PC-9 (cell line): ENCODE measurements at regions of chr12 and their contacts with region 1.

Region 1: GRCh38 chr12:12696562-12697383 is 790 bp upstream of the GPR19 start:
- DNase-seq: peak; percentile 64 to 89
- H3K4me3 ChIP-seq: peak overlapping the region; percentile 70
- H3K27ac ChIP-seq: peak overlapping the region; percentile 84
- H3K4me1 ChIP-seq: peaks cover 13% of the 10 kb centered on the region
- H3K27me3 ChIP-seq: no peaks in the 10 kb centered on the region
- CTCF ChIP-seq: no peak

Region 2: GRCh38 chr12:12272869-12273268 is 423.9 kb before region 1 on chr12:
- CTCF ChIA-PET with region 1: no interaction called
- POLR2A ChIA-PET with region 1: no interaction called
- intact Hi-C with region 1: loop called (anchors 1 kb)
- DNase-seq: peak; percentile 11 to 46
- H3K4me3 ChIP-seq: no peak overlapping the region
- H3K27ac ChIP-seq: no peak overlapping the region
- H3K4me1 ChIP-seq: peaks cover 19% of the 10 kb centered on the region; the same call in 1 of the 2 replicates
- H3K27me3 ChIP-seq: no peaks in the 10 kb centered on the region
- CTCF ChIP-seq: no peak

Region 3: GRCh38 chr12:12327802-12328201 is 369.0 kb before region 1 on chr12:
- CTCF ChIA-PET with region 1: interaction called, 17 read pairs
- POLR2A ChIA-PET with region 1: no interaction called
- intact Hi-C with region 1: no loop called
- DNase-seq: peak in 1 of 2 experiments; percentile 57
- H3K4me3 ChIP-seq: no peak overlapping the region
- H3K27ac ChIP-seq: no peak overlapping the region
- H3K4me1 ChIP-seq: peaks cover 19% of the 10 kb centered on the region
- H3K27me3 ChIP-seq: no peaks in the 10 kb centered on the region
- CTCF ChIP-seq: peak; percentile 80

Region 4: DNA sequence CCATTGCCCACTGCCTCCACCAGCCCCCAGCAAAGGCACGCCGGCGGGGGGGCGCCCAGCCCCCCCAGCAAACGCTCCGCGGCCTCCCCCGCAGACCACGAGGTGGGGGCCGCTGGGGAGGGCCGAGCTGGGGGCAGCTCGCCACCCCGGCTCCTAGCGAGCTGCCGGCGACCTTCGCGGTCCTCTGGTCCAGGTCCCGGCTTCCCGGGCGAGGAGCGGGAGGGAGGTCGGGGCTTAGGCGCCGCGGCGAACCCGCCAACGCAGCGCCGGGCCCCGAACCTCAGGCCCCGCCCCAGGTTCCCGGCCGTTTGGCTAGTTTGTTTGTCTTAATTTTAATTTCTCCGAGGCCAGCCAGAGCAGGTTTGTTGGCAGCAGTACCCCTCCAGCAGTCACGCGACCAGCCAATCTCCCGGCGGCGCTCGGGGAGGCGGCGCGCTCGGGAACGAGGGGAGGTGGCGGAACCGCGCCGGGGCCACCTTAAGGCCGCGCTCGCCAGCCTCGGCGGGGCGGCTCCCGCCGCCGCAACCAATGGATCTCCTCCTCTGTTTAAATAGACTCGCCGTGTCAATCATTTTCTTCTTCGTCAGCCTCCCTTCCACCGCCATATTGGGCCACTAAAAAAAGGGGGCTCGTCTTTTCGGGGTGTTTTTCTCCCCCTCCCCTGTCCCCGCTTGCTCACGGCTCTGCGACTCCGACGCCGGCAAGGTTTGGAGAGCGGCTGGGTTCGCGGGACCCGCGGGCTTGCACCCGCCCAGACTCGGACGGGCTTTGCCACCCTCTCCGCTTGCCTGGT is 20.2 kb after region 1 on chr12 and contains the start of gene CDKN1B:
- CTCF ChIA-PET with region 1: interaction called, 3 read pairs
- POLR2A ChIA-PET with region 1: no interaction called
- intact Hi-C with region 1: loop called (anchors 1 kb)
- DNase-seq: peak; percentile 82 to 98
- H3K4me3 ChIP-seq: peak within 1 kb of the TSS; percentile 96
- H3K27ac ChIP-seq: peak within 1 kb of the TSS; percentile 98
- H3K4me1 ChIP-seq: peaks cover 38% of the 10 kb centered on the region
- H3K27me3 ChIP-seq: no peaks in the 10 kb centered on the region
- CTCF ChIP-seq: no peak
- total RNA-seq, gene CDKN1B: 54.9 and 67.5 TPM in 2 replicates

Region 5: DNA sequence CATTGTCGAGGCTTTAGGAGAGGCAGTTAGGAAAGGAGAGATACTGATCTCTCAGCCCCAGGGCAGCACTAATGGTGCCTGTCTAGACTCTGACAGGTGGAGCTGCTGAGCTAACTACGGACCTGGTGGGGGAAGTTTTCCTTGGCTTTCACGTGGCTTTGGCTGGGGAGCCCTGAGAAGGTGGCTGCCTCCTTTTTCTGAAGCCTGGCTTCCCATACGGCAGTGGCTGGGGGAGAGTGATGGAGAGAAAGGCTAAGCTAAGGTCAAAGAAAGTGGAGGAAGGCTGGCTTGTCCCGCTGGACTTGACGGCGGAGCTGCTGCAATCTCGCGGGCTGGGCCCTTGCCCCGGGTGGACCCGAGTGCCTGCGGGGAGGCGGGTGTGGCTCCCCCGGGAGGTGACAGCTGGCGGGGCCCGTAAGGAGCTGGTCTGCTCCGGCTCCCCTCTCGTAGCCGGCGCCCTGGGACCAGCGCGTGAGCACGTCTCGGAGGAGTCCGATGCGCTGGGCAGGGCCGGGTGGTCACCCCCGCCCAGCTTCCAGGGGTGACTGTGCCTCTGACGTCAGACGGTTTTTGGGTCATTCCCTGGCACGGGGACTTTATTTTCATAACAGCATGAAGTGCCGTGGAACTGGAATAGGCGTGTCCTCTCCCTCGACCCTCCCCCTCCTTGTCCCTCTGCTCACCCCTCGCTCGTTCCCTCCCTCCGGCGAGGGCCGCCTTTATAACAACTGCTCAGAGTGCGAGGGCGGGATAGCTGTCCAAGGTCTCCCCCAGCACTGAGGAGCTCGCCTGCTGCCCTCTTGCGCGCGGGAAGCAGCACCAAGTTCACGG is 194.3 kb after region 1 on chr12 and contains the start of gene GPRC5A:
- CTCF ChIA-PET with region 1: no interaction called
- POLR2A ChIA-PET with region 1: no interaction called
- intact Hi-C with region 1: no loop called
- DNase-seq: peak; percentile 96 to 100
- H3K4me3 ChIP-seq: peak within 1 kb of the TSS; percentile 86
- H3K27ac ChIP-seq: peak within 1 kb of the TSS; percentile 93
- H3K4me1 ChIP-seq: peaks cover 44% of the 10 kb centered on the region
- H3K27me3 ChIP-seq: no peaks in the 10 kb centered on the region
- CTCF ChIP-seq: no peak; the same call in 1 of the 2 replicates
- total RNA-seq, gene GPRC5A: 468 and 642 TPM in 2 replicates